Breast epithelium (tissue), 4 donors: ENCODE measurements at regions of chr10 and their contacts with region 1.

Region 1: GRCh38 chr10:23556727-23557440 is 118.0 kb downstream of the OTUD1 start:
- DNase-seq: no peak
- H3K4me3 ChIP-seq: no peak overlapping the region
- H3K27ac ChIP-seq: no peak overlapping the region
- H3K4me1 ChIP-seq: no peaks in the 10 kb centered on the region
- H3K27me3 ChIP-seq: no peaks in the 10 kb centered on the region
- CTCF ChIP-seq: no peak
- POLR2A ChIP-seq: no peak

Region 2: DNA sequence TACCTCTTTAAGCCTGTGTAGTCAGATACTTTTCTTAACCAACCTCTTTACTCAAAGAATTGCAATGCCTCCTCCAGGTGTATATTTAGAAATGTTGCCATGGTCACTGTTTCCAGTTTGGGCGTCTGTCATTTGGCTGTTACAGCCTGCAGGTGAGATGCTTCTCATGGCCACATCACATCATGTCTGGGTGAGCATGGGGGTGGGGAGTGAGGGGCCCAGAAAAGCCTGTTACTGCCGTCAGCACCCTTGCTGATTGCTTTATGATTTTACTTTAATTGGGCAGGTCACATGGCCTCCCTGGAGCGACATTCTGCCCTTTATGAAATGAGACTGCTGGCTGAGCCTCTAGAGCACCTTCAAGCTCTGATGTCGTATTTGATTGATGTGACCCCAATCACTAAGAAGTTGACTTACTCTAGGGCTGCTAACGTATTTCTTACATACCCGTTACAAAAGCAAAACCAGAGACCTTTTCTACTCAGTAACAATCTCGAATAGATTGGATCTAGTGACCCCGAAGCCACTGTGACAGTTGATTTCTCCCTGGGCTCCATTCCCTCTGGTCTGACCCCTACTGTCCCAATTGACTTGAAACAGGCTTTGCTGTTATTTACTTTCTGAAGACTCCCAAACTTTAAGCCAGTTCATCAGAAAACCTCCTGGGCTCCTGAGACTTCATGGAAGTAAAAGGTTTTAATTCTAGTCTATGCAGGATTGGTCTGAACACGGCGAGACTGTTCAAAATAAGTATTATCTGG is 57.3 kb before region 1 on chr10:
- intact Hi-C with region 1: no loop called
- DNase-seq: no peak
- H3K4me3 ChIP-seq: no peak overlapping the region
- H3K27ac ChIP-seq: no peak overlapping the region
- H3K4me1 ChIP-seq: no peaks in the 10 kb centered on the region
- H3K27me3 ChIP-seq: no peaks in the 10 kb centered on the region
- CTCF ChIP-seq: no peak
- POLR2A ChIP-seq: no peak

Region 3: GRCh38 chr10:23543696-23544380 is 13.0 kb before region 1 on chr10:
- intact Hi-C with region 1: loop called (anchors 1 kb)
- DNase-seq: no peak
- H3K4me3 ChIP-seq: no peak overlapping the region
- H3K27ac ChIP-seq: no peak overlapping the region
- H3K4me1 ChIP-seq: no peaks in the 10 kb centered on the region
- H3K27me3 ChIP-seq: no peaks in the 10 kb centered on the region
- CTCF ChIP-seq: no peak
- POLR2A ChIP-seq: no peak